Heart left ventricle (tissue), 16 donors: ENCODE measurements at regions of chr17 and their contacts with region 1.

Region 1: GRCh38 chr17:43338886-43339516 is 59.8 kb upstream of the ARL4D start:
- DNase-seq: peak; percentile 61 to 85 (median 75)
- ATAC-seq: no peak
- H3K4me3 ChIP-seq: no peak overlapping the region
- H3K27ac ChIP-seq: no peak overlapping the region
- H3K4me1 ChIP-seq: peaks cover 0 to 42% (median 15%) of the 10 kb centered on the region in 12 donors
- H3K27me3 ChIP-seq: no peaks in the 10 kb centered on the region
- CTCF ChIP-seq: peak; percentile 57 to 81 (median 70)
- POLR2A ChIP-seq: no peak

Region 2: GRCh38 chr17:43175816-43176570 is 163.0 kb before region 1 on chr17:
- intact Hi-C with region 1: loop called in 1 of 10 experiments (anchors 5 kb)
- DNase-seq: no peak
- ATAC-seq: no peak
- H3K4me3 ChIP-seq: no peak overlapping the region
- H3K27ac ChIP-seq: peak overlapping the region in 9 of 12 donors; percentile 7 to 50 (median 38)
- H3K4me1 ChIP-seq: peaks cover 2 to 66% (median 54%) of the 10 kb centered on the region in 12 donors
- H3K27me3 ChIP-seq: no peaks in the 10 kb centered on the region
- CTCF ChIP-seq: no peak
- POLR2A ChIP-seq: no peak

Region 3: DNA sequence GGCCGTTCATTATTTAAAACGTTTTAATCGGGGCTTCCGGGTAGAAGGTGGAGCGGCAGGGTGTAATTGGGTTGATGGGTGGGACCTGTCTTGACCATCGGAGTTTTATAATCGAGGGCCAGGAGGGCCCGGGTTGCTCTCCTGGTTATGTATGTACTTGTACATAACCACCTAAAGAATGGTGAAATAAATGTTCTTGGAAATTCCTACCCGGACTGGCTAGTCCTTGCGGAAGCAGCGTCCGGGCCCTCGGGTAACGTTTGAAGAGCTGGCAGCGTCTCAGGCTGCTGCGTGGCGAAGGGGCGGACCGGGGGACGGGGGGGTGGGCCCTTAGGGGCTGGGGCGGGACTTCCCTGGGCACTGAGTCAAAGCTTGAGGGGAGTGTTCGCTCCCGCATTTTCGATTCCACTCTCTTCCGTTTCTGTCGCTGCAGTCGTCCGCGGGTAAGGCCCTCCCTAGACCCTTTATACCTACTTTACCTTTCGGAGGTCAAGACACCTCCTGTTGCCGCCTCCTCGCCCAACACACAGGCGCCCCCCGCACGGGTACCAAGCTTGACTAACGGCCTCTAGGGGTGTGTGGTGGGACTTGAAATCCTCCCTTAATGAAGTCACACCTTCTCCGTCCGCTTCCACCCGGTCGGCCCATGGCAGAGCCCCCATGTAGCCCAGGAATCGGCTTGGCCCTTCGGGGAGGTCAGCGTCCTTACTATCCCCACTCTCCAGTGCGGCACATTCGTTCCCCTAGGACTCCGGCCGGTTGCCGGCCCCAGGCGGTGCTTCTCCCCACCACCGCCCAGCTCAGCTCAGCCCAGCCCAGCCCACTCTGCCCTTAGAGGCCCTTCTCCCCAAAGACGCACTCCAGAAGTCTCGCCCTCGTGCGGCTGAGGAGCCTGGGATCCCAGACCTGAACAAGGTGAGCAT is 127.3 kb before region 1 on chr17 and contains the start of gene TMEM106A:
- intact Hi-C with region 1: loop called in 1 of 10 experiments (anchors 10 kb)
- DNase-seq: peak; percentile 81 to 89 (median 84)
- ATAC-seq: peak; percentile 81 to 94 (median 90)
- H3K4me3 ChIP-seq: peak within 1 kb of the TSS; percentile 8 to 85 (median 65)
- H3K27ac ChIP-seq: peak within 1 kb of the TSS; percentile 26 to 95 (median 82)
- H3K4me1 ChIP-seq: peaks cover 0 to 35% (median 12%) of the 10 kb centered on the region in 12 donors
- H3K27me3 ChIP-seq: no peaks in the 10 kb centered on the region
- CTCF ChIP-seq: peak in 8 of 12 donors; percentile 9 to 52 (median 34)
- POLR2A ChIP-seq: no peak
- total RNA-seq, gene TMEM106A: 1.3 to 26.0 (median 2.0) TPM